ENCODE measurements at regions of chr7 and their contacts with region 1.

Region 1: DNA sequence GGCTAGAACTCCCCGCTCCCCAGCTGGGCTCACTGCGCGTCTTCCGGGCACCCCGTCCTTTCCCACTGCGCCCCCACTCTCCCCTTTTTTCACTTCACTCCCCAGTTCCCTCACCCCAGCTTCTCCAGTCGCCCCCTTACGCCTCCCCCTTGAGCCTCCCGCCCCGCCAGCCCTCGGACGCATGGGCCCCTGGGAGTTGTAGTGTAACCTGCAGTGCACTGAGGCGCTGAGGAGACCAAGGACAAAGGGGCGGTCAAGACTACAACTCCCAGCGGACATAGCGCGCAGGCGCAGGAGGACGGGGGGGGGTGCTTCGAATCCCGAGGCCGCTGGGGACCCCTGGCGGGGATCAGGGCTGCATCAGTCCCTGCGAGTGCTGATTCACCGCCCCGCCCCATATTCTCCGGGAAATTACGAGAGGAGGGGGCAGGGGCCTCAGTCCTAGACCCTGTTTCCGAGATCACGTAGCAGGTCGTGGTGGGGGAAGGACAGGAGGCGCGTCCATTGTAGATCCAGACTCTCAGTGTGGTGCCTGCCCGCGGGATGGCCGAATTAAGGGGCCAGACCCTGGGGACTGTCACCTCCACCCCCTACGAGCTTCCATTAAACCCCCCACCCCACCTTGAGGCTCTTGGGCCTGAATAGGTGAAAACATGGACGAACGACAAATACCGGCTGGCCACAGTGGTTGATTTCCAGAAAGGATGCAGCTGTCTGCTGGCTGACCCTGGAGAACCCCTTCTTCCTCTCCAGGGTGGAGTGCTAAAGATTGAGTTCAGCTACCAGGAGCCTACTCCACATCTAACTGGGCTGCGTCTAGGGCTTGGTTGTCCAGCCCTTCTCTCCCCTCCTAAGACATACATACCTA is 554 bp upstream of the YWHAG start:
- DNase-seq: peak; percentile 95 to 97 (median 96)
- H3K4me3 ChIP-seq: peak overlapping the region; percentile 14 to 51
- H3K4me3 Mint-ChIP-seq: peak overlapping the region; percentile 86 to 99 (median 92)
- H3K27ac ChIP-seq: peak overlapping the region; percentile 94
- H3K27ac Mint-ChIP-seq: peak overlapping the region; percentile 91 to 98 (median 97)
- H3K4me1 ChIP-seq: peaks cover 43% of the 10 kb centered on the region
- H3K4me1 Mint-ChIP-seq: peaks cover 29 to 51% (median 39%) of the 10 kb centered on the region in 4 donors
- H3K27me3 ChIP-seq: no peaks in the 10 kb centered on the region
- H3K27me3 Mint-ChIP-seq: no peaks in the 10 kb centered on the region

Region 2: GRCh38 chr7:75914730-75915585 is 444.4 kb before region 1 on chr7 and contains the start of gene POR:
- CTCF ChIA-PET with region 1: no interaction called
- POLR2A ChIA-PET with region 1: no interaction called
- intact Hi-C with region 1: loop called (anchors 2 kb)
- DNase-seq: peak; percentile 94 to 100 (median 98)
- H3K4me3 ChIP-seq: peak within 1 kb of the TSS; percentile 79 to 81
- H3K4me3 Mint-ChIP-seq: peak within 1 kb of the TSS; percentile 91 to 95 (median 94)
- H3K27ac ChIP-seq: peak within 1 kb of the TSS; percentile 97
- H3K27ac Mint-ChIP-seq: peak within 1 kb of the TSS; percentile 92 to 98 (median 97)
- H3K4me1 ChIP-seq: peaks cover 34% of the 10 kb centered on the region
- H3K4me1 Mint-ChIP-seq: peaks cover 21 to 46% (median 35%) of the 10 kb centered on the region in 4 donors
- H3K27me3 ChIP-seq: no peaks in the 10 kb centered on the region
- H3K27me3 Mint-ChIP-seq: no peaks in the 10 kb centered on the region
- total RNA-seq, gene POR: 60.2 to 71.1 TPM

Region 3: GRCh38 chr7:76179686-76180085 is 179.7 kb before region 1 on chr7:
- CTCF ChIA-PET with region 1: interaction called, 9 read pairs
- POLR2A ChIA-PET with region 1: no interaction called
- intact Hi-C with region 1: loop called (anchors 1 kb)
- DNase-seq: no peak
- H3K4me3 ChIP-seq: no peak overlapping the region
- H3K4me3 Mint-ChIP-seq: no peak overlapping the region
- H3K27ac ChIP-seq: no peak overlapping the region
- H3K27ac Mint-ChIP-seq: no peak overlapping the region
- H3K4me1 ChIP-seq: no peaks in the 10 kb centered on the region
- H3K4me1 Mint-ChIP-seq: peaks cover 0 to 6% (median 4%) of the 10 kb centered on the region in 4 donors
- H3K27me3 ChIP-seq: no peaks in the 10 kb centered on the region
- H3K27me3 Mint-ChIP-seq: peaks cover 0 to 3% of the 10 kb centered on the region in 2 donors

Region 4: GRCh38 chr7:76302347-76303201 is 56.8 kb before region 1 on chr7 and contains the start of gene HSPB1:
- CTCF ChIA-PET with region 1: interaction called, 3 read pairs
- POLR2A ChIA-PET with region 1: interaction called, 11 read pairs
- intact Hi-C with region 1: loop called (anchors 2 kb)
- DNase-seq: peak; percentile 61 to 82 (median 65)
- H3K4me3 ChIP-seq: peak within 1 kb of the TSS; percentile 61 to 63
- H3K4me3 Mint-ChIP-seq: peak within 1 kb of the TSS; percentile 90 to 97 (median 92)
- H3K27ac ChIP-seq: peak within 1 kb of the TSS; percentile 62
- H3K27ac Mint-ChIP-seq: peak within 1 kb of the TSS; percentile 88 to 96 (median 93)
- H3K4me1 ChIP-seq: peaks cover 6% of the 10 kb centered on the region
- H3K4me1 Mint-ChIP-seq: peaks cover 11 to 24% (median 15%) of the 10 kb centered on the region in 4 donors
- H3K27me3 ChIP-seq: no peaks in the 10 kb centered on the region
- H3K27me3 Mint-ChIP-seq: no peaks in the 10 kb centered on the region
- total RNA-seq, gene HSPB1: 41.9 to 43.1 TPM

Region 5: DNA sequence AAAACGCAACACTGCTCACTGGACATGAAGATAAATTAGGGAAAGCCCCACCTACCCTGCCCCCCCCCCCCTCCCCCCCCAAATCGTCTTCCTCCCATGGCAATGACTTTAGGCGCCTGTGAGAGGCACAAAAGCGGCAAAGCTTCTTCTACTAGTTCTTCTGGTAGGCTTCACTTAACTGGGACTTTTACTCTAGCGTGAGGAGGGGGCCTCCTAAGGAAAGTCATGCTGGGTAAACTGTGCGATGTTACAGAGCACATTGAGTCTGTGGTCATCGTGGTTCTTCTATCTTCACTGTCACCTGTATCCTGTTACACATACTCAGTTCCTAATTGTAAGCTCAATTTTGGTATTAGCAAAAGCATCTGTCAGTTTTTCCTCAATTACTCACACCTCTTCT is 31.7 kb before region 1 on chr7:
- CTCF ChIA-PET with region 1: interaction called, 3 read pairs
- POLR2A ChIA-PET with region 1: interaction called, 10 read pairs
- intact Hi-C with region 1: no loop called
- DNase-seq: no peak
- H3K4me3 ChIP-seq: no peak overlapping the region
- H3K4me3 Mint-ChIP-seq: no peak overlapping the region
- H3K27ac ChIP-seq: no peak overlapping the region
- H3K27ac Mint-ChIP-seq: peak overlapping the region in 3 of 7 donors; percentile 59 to 70 (median 66)
- H3K4me1 ChIP-seq: peaks cover 7% of the 10 kb centered on the region
- H3K4me1 Mint-ChIP-seq: peaks cover 19 to 47% (median 35%) of the 10 kb centered on the region in 4 donors
- H3K27me3 ChIP-seq: no peaks in the 10 kb centered on the region
- H3K27me3 Mint-ChIP-seq: no peaks in the 10 kb centered on the region

Region 6: GRCh38 chr7:76393116-76394031 is 34.0 kb after region 1 on chr7:
- CTCF ChIA-PET with region 1: interaction called, 4 read pairs
- POLR2A ChIA-PET with region 1: interaction called, 26 read pairs
- intact Hi-C with region 1: loop called (anchors 1 kb)
- DNase-seq: peak; percentile 87 to 91 (median 91)
- H3K4me3 ChIP-seq: peak overlapping the region; percentile 21 to 89
- H3K4me3 Mint-ChIP-seq: peak overlapping the region; percentile 85 to 93 (median 89)
- H3K27ac ChIP-seq: peak overlapping the region; percentile 69
- H3K27ac Mint-ChIP-seq: peak overlapping the region; percentile 78 to 96 (median 93)
- H3K4me1 ChIP-seq: peaks cover 28% of the 10 kb centered on the region
- H3K4me1 Mint-ChIP-seq: peaks cover 10 to 31% (median 18%) of the 10 kb centered on the region in 4 donors
- H3K27me3 ChIP-seq: no peaks in the 10 kb centered on the region
- H3K27me3 Mint-ChIP-seq: no peaks in the 10 kb centered on the region